ENCODE measurements at regions of chr5 and their contacts with region 1.

Region 1: DNA sequence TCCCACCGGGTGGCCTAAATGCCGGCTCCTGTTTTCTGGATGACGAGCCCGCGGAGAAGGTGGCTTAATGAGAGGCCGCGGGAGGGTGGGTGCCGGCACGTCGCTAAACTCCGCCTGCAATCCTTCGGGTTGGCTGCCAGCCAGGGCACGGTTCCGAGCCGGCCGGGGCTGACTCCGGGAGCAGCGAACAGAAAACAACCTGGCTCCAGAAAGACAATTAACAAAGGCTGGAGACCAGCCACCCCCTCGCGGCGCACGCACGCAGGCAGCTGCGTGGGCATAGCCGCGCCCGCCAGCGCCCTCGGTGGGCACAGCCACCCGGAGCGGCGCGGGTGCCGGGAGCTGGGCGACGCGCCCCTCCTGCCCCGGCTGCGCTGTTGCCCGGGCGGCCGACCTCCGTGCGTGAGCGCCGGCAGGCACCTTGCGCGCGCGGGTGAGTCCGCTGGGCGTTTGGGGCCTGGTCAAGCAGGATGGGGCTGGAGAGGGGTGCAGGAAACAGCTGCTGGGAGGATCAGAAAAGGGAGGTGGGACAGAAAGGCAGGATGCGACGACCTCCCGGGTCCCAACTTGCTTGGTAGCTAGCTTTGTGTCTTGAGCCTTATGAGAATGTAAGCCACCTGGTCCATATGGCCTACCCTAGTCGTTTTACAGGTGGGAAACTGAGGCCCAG is at the start of gene ARHGEF37:
- DNase-seq: no peak
- CTCF ChIP-seq: no peak

Region 2: DNA sequence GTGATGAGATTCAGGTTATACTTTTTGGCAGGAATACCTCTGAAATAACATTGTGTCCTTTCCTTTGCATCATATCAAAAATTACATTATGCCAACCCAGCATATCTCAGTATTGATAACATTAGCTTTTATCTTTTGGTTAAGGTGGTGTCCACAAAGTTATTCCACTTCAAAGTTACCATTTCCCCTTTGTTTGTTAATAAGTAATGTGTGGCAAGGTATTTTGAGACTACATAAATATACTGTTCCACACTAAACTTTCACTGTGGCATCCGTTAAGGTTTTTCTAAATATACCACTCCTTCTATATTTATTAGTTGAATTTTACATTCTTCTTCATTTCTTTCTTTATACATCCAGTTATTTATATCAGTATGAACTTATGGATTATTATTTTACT is 14.1 kb before region 1 on chr5:
- CTCF ChIA-PET with region 1: interaction called, 27 read pairs
- POLR2A ChIA-PET with region 1: no interaction called
- DNase-seq: no peak
- CTCF ChIP-seq: no peak

Region 3: GRCh38 chr5:149597556-149597955 is 16.2 kb after region 1 on chr5:
- CTCF ChIA-PET with region 1: no interaction called
- POLR2A ChIA-PET with region 1: no interaction called
- DNase-seq: no peak
- CTCF ChIP-seq: no peak